ENCODE measurements at regions of chr2 and their contacts with region 1.

Region 1: DNA sequence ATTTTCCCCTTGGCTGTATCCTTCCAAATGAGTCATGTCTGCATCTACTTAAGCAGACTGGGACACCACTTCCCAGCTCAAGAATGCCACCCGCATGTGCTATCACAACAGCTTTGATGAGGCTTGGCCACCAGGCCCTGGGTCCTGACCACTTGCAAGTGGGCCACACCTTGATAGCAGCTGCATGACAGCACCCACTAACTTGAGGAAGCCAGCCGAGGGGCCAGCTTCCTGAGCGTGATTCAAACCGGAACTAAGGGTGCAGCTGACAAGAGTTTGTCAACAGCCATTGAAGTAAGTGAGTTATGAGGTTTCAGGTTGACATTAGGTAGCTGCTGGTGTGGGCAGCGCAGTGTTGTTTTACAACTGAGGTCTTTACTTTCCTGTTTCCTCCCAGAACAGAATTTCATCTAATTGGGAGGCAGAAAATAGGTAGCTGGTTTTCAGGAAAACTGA is 54.4 kb downstream of the EPHA4 start:
- DNase-seq: peak in 4 of 5 donors; percentile 20 to 68 (median 43)
- ATAC-seq: peak in 3 of 4 donors; percentile 63 to 67 (median 66)
- H3K4me3 ChIP-seq: peak overlapping the region in 1 of 12 donors; percentile 16
- H3K27ac ChIP-seq: peak overlapping the region in 6 of 12 donors; percentile 25 to 66 (median 38)
- H3K4me1 ChIP-seq: peaks cover 5 to 62% (median 31%) of the 10 kb centered on the region in 12 donors
- H3K27me3 ChIP-seq: no peaks in the 10 kb centered on the region
- CTCF ChIP-seq: no peak
- POLR2A ChIP-seq: no peak

Region 2: DNA sequence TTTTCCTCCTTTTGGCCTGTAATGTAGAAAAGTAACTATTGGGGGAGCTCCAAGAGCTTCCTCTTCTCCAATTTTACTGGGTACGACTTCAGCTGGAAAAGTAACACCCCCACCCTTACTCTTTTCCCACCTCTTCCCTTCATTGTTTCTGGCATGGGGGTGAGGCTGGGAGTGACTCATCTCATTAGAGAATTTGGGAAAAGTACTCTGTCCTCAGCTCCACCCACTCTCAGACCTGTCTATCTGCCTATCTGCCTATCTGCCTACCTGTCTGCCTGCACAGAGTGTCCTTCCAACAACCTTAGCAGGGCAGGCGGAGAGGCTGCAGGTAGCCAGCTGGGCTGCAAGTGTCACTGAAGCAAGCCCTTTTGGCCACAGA is 39.2 kb before region 1 on chr2:
- intact Hi-C with region 1: loop called in 1 of 10 experiments (anchors 2 kb)
- DNase-seq: no peak
- ATAC-seq: peak in 3 of 4 donors; percentile 36 to 67 (median 38)
- H3K4me3 ChIP-seq: no peak overlapping the region
- H3K27ac ChIP-seq: peak overlapping the region in 2 of 12 donors; percentile 38 to 41
- H3K4me1 ChIP-seq: peaks cover 0 to 21% (median 6%) of the 10 kb centered on the region in 12 donors
- H3K27me3 ChIP-seq: no peaks in the 10 kb centered on the region
- CTCF ChIP-seq: peak in 2 of 12 donors; percentile 11 to 28
- POLR2A ChIP-seq: no peak

Region 3: DNA sequence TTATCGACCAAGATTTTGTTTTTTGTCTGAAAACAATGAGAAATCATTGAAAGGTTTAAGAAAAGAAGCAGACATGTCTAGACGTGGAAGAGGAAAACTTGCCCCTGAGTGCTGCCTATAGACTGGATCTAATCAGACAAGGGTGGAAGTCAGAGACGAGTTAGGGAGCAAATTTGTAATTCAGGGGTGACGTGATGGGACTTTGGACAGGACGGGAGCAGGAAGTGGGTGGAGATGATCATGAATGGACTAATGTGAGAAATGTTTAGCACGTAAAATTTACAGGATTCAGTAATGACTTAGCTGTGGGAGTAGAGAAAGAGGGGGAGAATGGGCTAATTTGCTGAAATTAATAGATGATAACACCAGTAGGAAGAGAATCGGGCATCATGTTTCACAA is 171.4 kb after region 1 on chr2:
- intact Hi-C with region 1: no loop called
- DNase-seq: no peak
- ATAC-seq: no peak
- H3K4me3 ChIP-seq: no peak overlapping the region
- H3K27ac ChIP-seq: no peak overlapping the region
- H3K4me1 ChIP-seq: no peaks in the 10 kb centered on the region
- H3K27me3 ChIP-seq: no peaks in the 10 kb centered on the region
- CTCF ChIP-seq: no peak
- POLR2A ChIP-seq: no peak